Activated CD4-positive, alpha-beta memory T cell treated with anti-CD3 and anti-CD28 coated beads for 36 hours (primary cell): ENCODE measurements at regions of chr6 and their contacts with region 1.

Region 1: GRCh38 chr6:108947114-108947854 is 99.1 kb downstream of the ARMC2 start:
- DNase-seq: no peak
- H3K4me3 Mint-ChIP-seq: no peak overlapping the region
- H3K27ac Mint-ChIP-seq: no peak overlapping the region
- H3K4me1 Mint-ChIP-seq: peaks cover 34% of the 10 kb centered on the region
- H3K27me3 Mint-ChIP-seq: no peaks in the 10 kb centered on the region

Region 2: GRCh38 chr6:108961985-108962384 is 14.7 kb after region 1 on chr6:
- CTCF ChIA-PET with region 1: no interaction called
- POLR2A ChIA-PET with region 1: no interaction called
- intact Hi-C with region 1: no loop called
- DNase-seq: no peak
- H3K4me3 Mint-ChIP-seq: no peak overlapping the region
- H3K27ac Mint-ChIP-seq: no peak overlapping the region
- H3K4me1 Mint-ChIP-seq: peaks cover 7% of the 10 kb centered on the region
- H3K27me3 Mint-ChIP-seq: no peaks in the 10 kb centered on the region

Region 3: GRCh38 chr6:109308018-109308492 is 360.8 kb after region 1 on chr6:
- CTCF ChIA-PET with region 1: no interaction called
- POLR2A ChIA-PET with region 1: no interaction called
- intact Hi-C with region 1: loop called (anchors 10 kb)
- DNase-seq: peak; percentile 70
- H3K4me3 Mint-ChIP-seq: no peak overlapping the region
- H3K27ac Mint-ChIP-seq: peak overlapping the region; percentile 57
- H3K4me1 Mint-ChIP-seq: peaks cover 31% of the 10 kb centered on the region
- H3K27me3 Mint-ChIP-seq: no peaks in the 10 kb centered on the region